ENCODE measurements at regions of chr19 and their contacts with region 1.

Region 1: GRCh38 chr19:13880059-13881043 is 3.4 kb downstream of the NANOS3 start:
- DNase-seq: peak; percentile 99
- H3K4me3 Mint-ChIP-seq: peak overlapping the region; percentile 19
- H3K27ac Mint-ChIP-seq: peak overlapping the region; percentile 80
- H3K4me1 Mint-ChIP-seq: peaks cover 35% of the 10 kb centered on the region
- H3K27me3 Mint-ChIP-seq: no peaks in the 10 kb centered on the region

Region 2: GRCh38 chr19:13905938-13906904 is 25.9 kb after region 1 on chr19 and contains the starts of genes BRME1 and CC2D1A:
- CTCF ChIA-PET with region 1: interaction called, 12 read pairs
- POLR2A ChIA-PET with region 1: interaction called, 12 read pairs
- DNase-seq: peak; percentile 95
- H3K4me3 Mint-ChIP-seq: peak within 1 kb of the TSS; percentile 80
- H3K27ac Mint-ChIP-seq: peak within 1 kb of the TSS; percentile 69
- H3K4me1 Mint-ChIP-seq: peaks cover 29% of the 10 kb centered on the region
- H3K27me3 Mint-ChIP-seq: no peaks in the 10 kb centered on the region
- total RNA-seq, gene BRME1: 3.8 to 4.4 TPM
- total RNA-seq, gene CC2D1A: 30.6 to 32.7 TPM

Region 3: DNA sequence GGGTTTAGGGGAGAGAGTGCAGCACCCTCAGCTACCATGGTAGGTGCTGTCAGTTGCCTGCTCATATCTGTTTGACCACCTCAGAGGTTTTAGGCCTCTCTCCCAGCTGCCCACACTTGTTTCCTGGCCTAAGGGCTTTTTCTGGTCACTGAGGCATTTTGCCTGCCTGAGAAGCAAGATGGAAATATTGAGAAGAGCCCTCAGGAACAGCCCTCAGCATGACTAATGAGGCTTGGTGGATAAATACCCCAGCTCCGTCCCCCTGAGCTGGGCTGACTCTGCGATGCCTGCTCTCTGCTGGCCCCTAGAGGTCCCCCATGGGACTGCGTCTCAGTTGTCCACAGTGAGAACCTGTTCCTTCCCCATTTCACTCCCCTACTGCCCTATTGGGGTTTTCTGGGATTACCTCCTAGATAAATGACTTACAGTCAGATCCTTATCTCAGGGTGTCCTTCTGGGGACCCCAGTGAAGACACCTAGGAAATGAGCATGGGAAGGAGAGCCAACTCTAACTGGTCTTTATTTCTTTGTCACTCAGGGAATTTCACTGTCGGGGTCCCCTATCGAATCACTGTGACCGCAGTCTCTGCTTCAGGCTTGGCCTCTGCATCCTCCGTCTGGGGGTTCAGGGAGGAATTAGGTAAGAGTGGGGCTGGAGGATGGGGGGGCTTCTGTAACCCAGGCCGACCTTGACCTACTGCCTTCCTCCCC is 168.2 kb after region 1 on chr19:
- CTCF ChIA-PET with region 1: interaction called, 11 read pairs
- POLR2A ChIA-PET with region 1: no interaction called
- DNase-seq: peak; percentile 75
- H3K4me3 Mint-ChIP-seq: no peak overlapping the region
- H3K27ac Mint-ChIP-seq: no peak overlapping the region
- H3K4me1 Mint-ChIP-seq: peaks cover 2% of the 10 kb centered on the region
- H3K27me3 Mint-ChIP-seq: no peaks in the 10 kb centered on the region

Region 4: GRCh38 chr19:14059093-14059480 is 178.7 kb after region 1 on chr19:
- CTCF ChIA-PET with region 1: interaction called, 15 read pairs
- POLR2A ChIA-PET with region 1: no interaction called
- DNase-seq: peak; percentile 53
- H3K4me3 Mint-ChIP-seq: no peak overlapping the region
- H3K27ac Mint-ChIP-seq: no peak overlapping the region
- H3K4me1 Mint-ChIP-seq: peaks cover 14% of the 10 kb centered on the region
- H3K27me3 Mint-ChIP-seq: peaks cover 34% of the 10 kb centered on the region

Region 5: GRCh38 chr19:14073261-14073924 is 193.0 kb after region 1 on chr19:
- CTCF ChIA-PET with region 1: interaction called, 52 read pairs
- POLR2A ChIA-PET with region 1: interaction called, 12 read pairs
- DNase-seq: peak; percentile 78
- H3K4me3 Mint-ChIP-seq: peak overlapping the region; percentile 81
- H3K27ac Mint-ChIP-seq: peak overlapping the region; percentile 73
- H3K4me1 Mint-ChIP-seq: peaks cover 26% of the 10 kb centered on the region
- H3K27me3 Mint-ChIP-seq: peaks cover 2% of the 10 kb centered on the region

Region 6: DNA sequence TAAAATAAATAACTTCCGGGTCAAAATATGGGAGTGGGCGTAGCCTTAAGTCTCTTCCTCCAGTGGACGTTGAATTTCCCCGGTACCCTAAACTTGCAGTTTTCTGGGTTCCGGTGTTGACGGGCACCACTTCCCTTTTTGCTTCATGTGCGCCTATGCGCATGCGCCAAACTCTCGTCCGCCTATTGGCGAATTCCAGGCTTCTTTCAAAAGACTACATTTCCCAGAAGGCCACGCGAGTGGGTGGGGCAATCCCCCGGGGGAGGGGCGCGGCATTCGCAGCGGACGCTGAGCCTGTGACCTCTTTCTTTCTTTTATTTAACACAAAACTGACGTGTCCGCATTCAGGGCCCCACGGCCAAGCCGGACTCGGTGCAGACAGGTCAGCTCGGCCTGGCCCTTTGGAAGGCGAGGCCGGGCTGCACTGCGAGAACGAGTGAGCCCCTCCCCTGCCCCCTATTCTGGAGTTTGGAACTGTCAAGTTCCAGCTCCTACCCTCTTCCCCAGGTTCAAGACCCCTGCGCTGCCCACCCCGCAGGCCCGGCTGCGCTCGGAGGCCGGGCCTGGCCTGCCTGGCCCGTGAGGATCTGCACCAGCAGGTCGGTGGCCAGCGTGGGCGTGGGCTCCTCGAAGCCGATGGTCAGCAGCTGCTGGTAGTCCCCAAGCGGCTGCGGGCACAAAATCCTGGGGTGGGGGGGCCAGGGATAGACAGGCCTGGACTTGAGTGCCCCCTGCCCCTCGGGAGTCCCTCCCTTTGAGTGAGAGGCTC is 201.2 kb after region 1 on chr19:
- CTCF ChIA-PET with region 1: interaction called, 16 read pairs
- POLR2A ChIA-PET with region 1: interaction called, 18 read pairs
- DNase-seq: peak; percentile 99
- H3K4me3 Mint-ChIP-seq: peak overlapping the region; percentile 95
- H3K27ac Mint-ChIP-seq: peak overlapping the region; percentile 91
- H3K4me1 Mint-ChIP-seq: peaks cover 20% of the 10 kb centered on the region
- H3K27me3 Mint-ChIP-seq: no peaks in the 10 kb centered on the region

Measured in activated CD4-positive, alpha-beta memory T cell treated with anti-CD3 and anti-CD28 coated beads, Interleukin-2, amount 10 ng/mL, durations not matched to agents 7 days and 5 days (primary cell).